Thyroid gland (tissue), 4 donors: ENCODE measurements at regions of chr4 and their contacts with region 1.

Region 1: GRCh38 chr4:138035781-138036258 is 206.3 kb downstream of the SLC7A11 start:
- DNase-seq: peak in 1 of 2 donors; percentile 2
- H3K4me3 ChIP-seq: no peak overlapping the region
- H3K27ac ChIP-seq: no peak overlapping the region
- H3K4me1 ChIP-seq: no peaks in the 10 kb centered on the region
- H3K27me3 ChIP-seq: no peaks in the 10 kb centered on the region
- CTCF ChIP-seq: peak in 4 of 6 experiments; percentile 33 to 62 (median 56)
- POLR2A ChIP-seq: no peak

Region 2: GRCh38 chr4:138174981-138175794 is 139.4 kb after region 1 on chr4:
- intact Hi-C with region 1: no loop called
- DNase-seq: peak; percentile 11 to 50
- H3K4me3 ChIP-seq: no peak overlapping the region
- H3K27ac ChIP-seq: peak overlapping the region in 1 of 3 donors; percentile 41
- H3K4me1 ChIP-seq: peaks cover 7 to 9% of the 10 kb centered on the region in 2 donors
- H3K27me3 ChIP-seq: no peaks in the 10 kb centered on the region
- CTCF ChIP-seq: peak in 2 of 6 experiments; percentile 33 to 35
- POLR2A ChIP-seq: no peak

Region 3: GRCh38 chr4:138680989-138681604 is 645.3 kb after region 1 on chr4:
- intact Hi-C with region 1: loop called (anchors 5 kb)
- DNase-seq: peak; percentile 76 to 91
- H3K4me3 ChIP-seq: no peak overlapping the region
- H3K27ac ChIP-seq: no peak overlapping the region
- H3K4me1 ChIP-seq: peaks cover 0 to 7% of the 10 kb centered on the region in 2 donors
- H3K27me3 ChIP-seq: no peaks in the 10 kb centered on the region
- CTCF ChIP-seq: peak; percentile 85 to 98 (median 86)
- POLR2A ChIP-seq: no peak

Region 4: GRCh38 chr4:138870737-138871554 is 835.1 kb after region 1 on chr4:
- intact Hi-C with region 1: loop called (anchors 5 kb)
- DNase-seq: peak; percentile 61 to 71
- H3K4me3 ChIP-seq: no peak overlapping the region
- H3K27ac ChIP-seq: no peak overlapping the region
- H3K4me1 ChIP-seq: peaks cover 0 to 4% of the 10 kb centered on the region in 2 donors
- H3K27me3 ChIP-seq: no peaks in the 10 kb centered on the region
- CTCF ChIP-seq: peak; percentile 46 to 89 (median 82)
- POLR2A ChIP-seq: no peak